ENCODE measurements at regions of chr5 and their contacts with region 1.

Region 1: GRCh38 chr5:118397236-118397635 is 591.1 kb downstream of the DTWD2 start:
- DNase-seq: no peak
- ATAC-seq: no peak
- H3K4me3 ChIP-seq: no peak overlapping the region
- H3K27ac ChIP-seq: no peak overlapping the region
- H3K4me1 ChIP-seq: no peaks in the 10 kb centered on the region
- H3K27me3 ChIP-seq: no peaks in the 10 kb centered on the region
- CTCF ChIP-seq: no peak
- EP300 ChIP-seq: no peak
- POLR2A ChIP-seq: no peak
- RAD21 ChIP-seq: no peak

Region 2: DNA sequence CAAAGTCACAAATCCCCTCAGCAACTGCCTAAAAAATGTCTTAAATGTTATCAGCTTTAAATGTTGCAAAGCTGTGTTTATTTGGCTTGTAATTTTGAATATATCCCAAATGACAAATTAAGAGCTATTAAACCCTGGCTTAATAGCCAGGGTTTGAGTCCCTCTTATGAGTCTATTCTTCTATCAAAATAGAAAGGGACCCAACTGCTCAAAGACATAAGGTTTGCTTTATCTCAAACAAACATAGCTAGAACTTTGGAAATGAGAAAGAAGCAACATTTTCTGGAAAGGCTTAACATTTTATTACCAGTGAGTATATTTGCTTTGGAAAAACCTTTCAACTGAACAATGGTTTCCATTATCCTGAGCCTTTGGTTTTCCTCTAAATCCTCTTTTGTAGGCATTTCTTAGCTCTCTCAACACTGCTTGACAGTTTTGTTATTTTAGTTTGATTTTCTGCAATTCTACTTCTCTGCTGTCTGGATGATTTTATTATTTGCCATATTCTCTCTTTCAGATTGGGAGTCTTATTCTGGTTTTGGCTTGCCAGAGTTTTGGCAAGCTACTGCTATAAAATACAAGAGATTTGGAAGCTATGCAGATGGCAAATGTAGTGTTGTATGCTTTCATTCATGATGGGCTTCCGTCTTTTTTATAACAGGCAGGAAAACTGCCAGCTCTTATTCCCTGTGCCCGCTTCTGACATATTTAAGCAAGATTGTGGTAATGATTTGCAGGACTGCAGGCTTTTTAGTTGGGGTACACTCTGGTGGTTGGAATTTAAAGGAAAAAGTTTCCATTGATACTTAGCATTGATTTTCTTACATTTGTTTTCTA is 143.8 kb before region 1 on chr5:
- CTCF ChIA-PET with region 1: no interaction called
- POLR2A ChIA-PET with region 1: no interaction called
- in situ Hi-C with region 1: no loop called
- intact Hi-C with region 1: no loop called
- DNase-seq: no peak
- ATAC-seq: no peak
- H3K4me3 ChIP-seq: no peak overlapping the region
- H3K27ac ChIP-seq: no peak overlapping the region
- H3K4me1 ChIP-seq: no peaks in the 10 kb centered on the region
- H3K27me3 ChIP-seq: no peaks in the 10 kb centered on the region
- CTCF ChIP-seq: no peak
- EP300 ChIP-seq: no peak
- POLR2A ChIP-seq: no peak
- RAD21 ChIP-seq: no peak

Region 3: DNA sequence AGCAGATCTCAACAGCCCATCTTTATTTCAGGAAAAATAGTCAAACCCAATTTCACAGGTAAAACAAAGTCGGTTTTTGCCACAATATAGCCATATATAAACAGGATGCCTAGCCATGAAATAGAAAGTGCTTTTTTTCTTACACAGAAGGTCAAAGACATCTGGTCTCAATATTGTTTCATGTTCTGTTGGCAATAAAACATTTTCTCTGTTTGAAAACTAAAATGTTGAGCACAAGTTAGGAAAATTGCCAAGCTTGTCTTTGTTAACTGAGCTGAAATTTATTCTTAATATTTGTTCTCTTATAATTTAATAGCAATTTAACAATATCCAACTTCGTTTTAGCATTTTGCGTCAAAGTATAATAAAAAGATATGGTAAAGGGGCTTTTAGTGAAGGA is 82.3 kb before region 1 on chr5:
- CTCF ChIA-PET with region 1: no interaction called
- POLR2A ChIA-PET with region 1: no interaction called
- in situ Hi-C with region 1: loop called (anchors 10 kb)
- intact Hi-C with region 1: no loop called
- DNase-seq: no peak
- ATAC-seq: no peak
- H3K4me3 ChIP-seq: no peak overlapping the region
- H3K27ac ChIP-seq: no peak overlapping the region
- H3K4me1 ChIP-seq: no peaks in the 10 kb centered on the region
- H3K27me3 ChIP-seq: no peaks in the 10 kb centered on the region
- CTCF ChIP-seq: no peak
- EP300 ChIP-seq: no peak
- POLR2A ChIP-seq: no peak
- RAD21 ChIP-seq: no peak

Region 4: DNA sequence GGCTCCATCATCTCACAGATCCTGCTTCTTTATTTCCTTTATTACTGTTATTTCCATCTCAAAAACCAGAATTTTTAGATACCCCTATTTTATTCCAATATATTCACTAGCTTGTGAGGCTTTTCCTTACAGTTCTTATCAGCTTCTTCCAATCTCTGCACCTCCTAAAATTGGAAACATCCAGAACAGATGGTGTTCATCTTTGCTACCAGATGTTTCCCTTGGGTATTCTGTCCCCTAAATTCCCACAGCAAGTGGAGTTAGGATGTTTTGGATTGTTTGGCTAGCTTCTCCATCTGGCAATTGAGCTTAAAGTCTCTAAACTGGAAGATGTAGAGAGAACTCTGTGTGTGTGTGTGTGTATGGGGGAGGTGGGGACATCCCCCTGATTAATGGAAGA is 10.7 kb after region 1 on chr5:
- CTCF ChIA-PET with region 1: no interaction called
- POLR2A ChIA-PET with region 1: no interaction called
- in situ Hi-C with region 1: no loop called
- intact Hi-C with region 1: no loop called
- DNase-seq: no peak
- ATAC-seq: no peak
- H3K4me3 ChIP-seq: no peak overlapping the region
- H3K27ac ChIP-seq: no peak overlapping the region
- H3K4me1 ChIP-seq: no peaks in the 10 kb centered on the region
- H3K27me3 ChIP-seq: no peaks in the 10 kb centered on the region
- CTCF ChIP-seq: no peak
- EP300 ChIP-seq: no peak
- POLR2A ChIP-seq: no peak
- RAD21 ChIP-seq: no peak